Gastrocnemius medialis (tissue), 4 donors: ENCODE measurements at regions of chr1 and their contacts with region 1.

Region 1: DNA sequence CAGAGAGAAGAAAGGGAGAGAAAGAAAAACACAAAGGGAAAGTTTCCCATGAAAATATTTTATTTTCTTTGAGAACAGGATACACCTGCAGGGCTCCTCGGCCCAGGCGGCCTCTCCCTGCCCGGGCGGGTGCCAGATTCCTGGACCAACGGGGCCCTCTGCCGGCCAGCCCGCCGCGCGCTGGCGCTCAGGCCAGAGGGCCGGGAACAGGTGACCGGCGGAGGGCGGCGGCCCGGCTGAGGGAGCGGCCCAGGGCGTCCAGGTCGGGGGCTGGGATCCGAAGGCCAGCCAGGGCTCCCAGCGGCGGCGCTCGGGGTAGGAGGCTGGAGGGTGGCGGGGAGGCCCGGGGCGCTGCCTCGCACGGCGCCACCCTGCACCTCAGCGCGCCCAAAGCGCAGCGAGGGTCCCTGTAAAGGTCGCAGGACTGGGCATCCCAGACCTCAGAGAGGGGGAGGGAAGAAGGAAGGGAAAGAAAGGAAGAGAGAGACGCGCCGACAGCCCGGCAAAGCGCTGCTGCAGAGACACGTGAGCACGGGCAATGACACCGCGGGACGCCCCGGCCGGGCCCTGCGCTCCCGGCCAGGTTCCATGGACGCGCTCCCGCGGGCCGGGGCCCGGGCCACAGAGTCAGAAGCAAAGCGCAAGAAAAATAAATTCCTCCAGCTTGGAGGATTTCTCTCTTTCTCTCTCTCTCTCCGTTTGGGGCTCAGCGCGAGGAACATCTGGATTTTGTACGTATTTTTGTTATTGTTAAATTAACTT is 927 bp downstream of the WNT9A start:
- DNase-seq: peak; percentile 76 to 86
- ATAC-seq: peak; percentile 48 to 49
- H3K4me3 ChIP-seq: peak overlapping the region; percentile 63 to 80 (median 72)
- H3K27ac ChIP-seq: peak overlapping the region; percentile 91 to 98 (median 97)
- H3K4me1 ChIP-seq: peaks cover 46 to 49% of the 10 kb centered on the region in 2 donors
- H3K27me3 ChIP-seq: no peaks in the 10 kb centered on the region
- CTCF ChIP-seq: peak; percentile 71 to 90 (median 84)
- POLR2A ChIP-seq: peak; percentile 51 to 60

Region 2: DNA sequence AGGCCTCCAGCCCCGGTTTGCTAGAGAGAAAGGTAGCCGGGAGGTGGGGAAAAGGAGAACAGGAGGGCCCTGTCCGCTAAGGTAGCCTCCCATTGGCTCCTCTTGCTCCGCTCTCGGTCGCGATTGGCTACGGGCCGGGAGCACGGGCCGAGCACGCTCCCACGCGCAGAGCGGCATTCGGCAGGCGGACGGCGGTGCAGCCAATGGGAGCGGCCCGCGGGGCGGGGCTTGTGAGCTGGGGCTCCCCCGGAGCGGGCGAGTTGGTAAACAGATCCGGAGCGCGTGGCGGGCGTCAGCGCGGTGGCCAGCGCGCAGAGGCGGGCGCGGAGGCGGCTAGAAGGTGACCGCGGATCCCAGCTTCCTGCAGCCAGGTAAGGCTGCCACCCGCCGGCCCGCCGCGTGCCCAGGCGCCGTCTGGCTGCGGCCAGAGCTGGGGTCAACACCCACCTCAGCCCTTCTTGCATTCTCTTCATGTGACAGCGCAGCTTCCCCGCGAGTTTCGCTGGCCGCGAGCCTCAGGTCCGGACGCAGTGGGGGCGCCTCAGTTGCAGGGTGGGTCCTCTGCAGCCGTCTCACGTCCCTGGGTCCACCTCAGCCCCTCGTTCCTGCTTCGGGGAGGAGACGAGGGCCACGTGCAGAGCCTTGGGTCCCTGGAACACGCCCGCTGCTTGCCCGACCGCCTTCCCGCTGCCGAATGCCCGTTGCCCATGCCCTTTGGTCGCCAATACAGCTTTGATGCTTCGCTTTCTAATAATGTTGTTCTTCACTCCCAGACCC is 1006.6 kb before region 1 on chr1 and contains the start of gene COQ8A:
- in situ Hi-C with region 1: no loop called
- intact Hi-C with region 1: loop called (anchors 5 kb)
- DNase-seq: peak; percentile 99 to 100
- ATAC-seq: peak; percentile 73 to 74
- H3K4me3 ChIP-seq: peak within 1 kb of the TSS; percentile 84 to 95 (median 88)
- H3K27ac ChIP-seq: peak within 1 kb of the TSS; percentile 98 to 99 (median 99)
- H3K4me1 ChIP-seq: peaks cover 26 to 47% of the 10 kb centered on the region in 2 donors
- H3K27me3 ChIP-seq: no peaks in the 10 kb centered on the region
- CTCF ChIP-seq: peak in 1 of 5 experiments; percentile 0
- POLR2A ChIP-seq: peak; percentile 97 to 98
- total RNA-seq, gene COQ8A: 950 to 2,403 (median 1,384) TPM

Region 3: DNA sequence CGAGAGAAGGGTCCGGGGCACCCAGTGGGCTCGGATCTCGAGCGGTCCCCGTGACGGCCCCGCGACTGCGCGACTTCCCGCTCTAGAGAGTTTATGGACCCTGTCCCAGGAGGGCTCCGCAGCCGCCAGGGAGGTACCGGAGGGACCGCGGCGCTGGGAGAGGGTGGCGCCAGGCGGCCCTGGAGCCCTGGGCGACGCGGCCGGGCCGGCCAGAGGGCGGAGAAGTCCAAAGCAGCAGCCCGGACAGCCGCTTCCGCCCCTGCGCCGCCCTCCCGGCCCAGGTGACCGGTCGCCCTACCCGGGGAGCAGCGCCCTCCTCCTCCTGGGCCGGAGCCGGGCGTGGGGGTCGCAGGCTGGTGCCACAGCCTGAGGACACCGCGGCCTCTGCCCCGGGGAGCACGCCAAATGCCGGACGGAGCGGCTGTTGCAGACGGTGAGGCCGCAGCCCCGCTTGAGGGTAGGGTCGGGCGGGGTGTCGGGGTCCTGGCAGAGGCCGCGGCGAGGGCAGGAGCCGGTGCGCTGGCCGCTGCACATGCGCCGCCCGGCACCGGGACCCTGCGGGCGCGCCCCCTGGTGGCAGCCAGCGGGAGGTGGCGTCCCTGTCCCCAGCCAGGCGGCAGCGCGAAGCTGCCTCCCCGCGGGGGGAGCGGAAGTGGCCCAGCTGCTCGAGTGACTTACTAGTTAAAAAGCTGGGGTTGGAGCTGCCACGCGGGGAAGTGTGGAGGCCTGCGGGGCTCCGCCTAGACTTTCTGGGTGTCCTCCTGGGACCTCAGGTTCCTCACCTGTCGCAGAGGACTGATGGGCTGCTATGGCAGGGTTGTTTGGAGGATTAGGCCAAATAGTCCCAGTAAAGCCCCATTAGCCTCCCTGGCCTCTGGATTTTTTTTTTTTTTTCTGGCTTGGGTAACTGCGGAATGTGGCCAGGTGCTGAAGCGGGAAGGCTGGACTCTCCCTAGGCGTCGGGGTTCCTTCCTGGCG is 404.4 kb before region 1 on chr1:
- in situ Hi-C with region 1: no loop called
- intact Hi-C with region 1: loop called (anchors 2 kb)
- DNase-seq: peak; percentile 68 to 84
- ATAC-seq: peak; percentile 92 to 93
- H3K4me3 ChIP-seq: peak overlapping the region; percentile 75 to 91 (median 88)
- H3K27ac ChIP-seq: peak overlapping the region; percentile 82 to 94 (median 88)
- H3K4me1 ChIP-seq: peaks cover 5 to 14% of the 10 kb centered on the region in 2 donors
- H3K27me3 ChIP-seq: no peaks in the 10 kb centered on the region
- CTCF ChIP-seq: peak; percentile 90 to 99 (median 97)
- POLR2A ChIP-seq: peak in 1 of 2 donors; percentile 46

Region 4: GRCh38 chr1:227753999-227754711 is 192.7 kb before region 1 on chr1:
- in situ Hi-C with region 1: loop called in 1 of 4 experiments (anchors 5 kb)
- intact Hi-C with region 1: no loop called
- DNase-seq: peak; percentile 69 to 90
- ATAC-seq: peak; percentile 82 to 85
- H3K4me3 ChIP-seq: no peak overlapping the region
- H3K27ac ChIP-seq: peak overlapping the region; percentile 45 to 90 (median 84)
- H3K4me1 ChIP-seq: peaks cover 68 to 75% of the 10 kb centered on the region in 2 donors
- H3K27me3 ChIP-seq: no peaks in the 10 kb centered on the region
- CTCF ChIP-seq: no peak
- POLR2A ChIP-seq: no peak

Region 5: GRCh38 chr1:227787513-227788270 is 159.1 kb before region 1 on chr1:
- in situ Hi-C with region 1: no loop called
- intact Hi-C with region 1: loop called (anchors 1 kb)
- DNase-seq: peak; percentile 87 to 91
- ATAC-seq: peak; percentile 76 to 79
- H3K4me3 ChIP-seq: peak overlapping the region; percentile 68 to 97 (median 70)
- H3K27ac ChIP-seq: peak overlapping the region; percentile 77 to 87 (median 82)
- H3K4me1 ChIP-seq: peaks cover 13 to 20% of the 10 kb centered on the region in 2 donors
- H3K27me3 ChIP-seq: no peaks in the 10 kb centered on the region
- CTCF ChIP-seq: no peak
- POLR2A ChIP-seq: peak; percentile 77 to 88

Region 6: GRCh38 chr1:227816750-227817446 is 129.9 kb before region 1 on chr1:
- in situ Hi-C with region 1: no loop called
- intact Hi-C with region 1: no loop called
- DNase-seq: no peak
- ATAC-seq: no peak
- H3K4me3 ChIP-seq: no peak overlapping the region
- H3K27ac ChIP-seq: no peak overlapping the region
- H3K4me1 ChIP-seq: no peaks in the 10 kb centered on the region
- H3K27me3 ChIP-seq: no peaks in the 10 kb centered on the region
- CTCF ChIP-seq: no peak
- POLR2A ChIP-seq: no peak

Region 7: DNA sequence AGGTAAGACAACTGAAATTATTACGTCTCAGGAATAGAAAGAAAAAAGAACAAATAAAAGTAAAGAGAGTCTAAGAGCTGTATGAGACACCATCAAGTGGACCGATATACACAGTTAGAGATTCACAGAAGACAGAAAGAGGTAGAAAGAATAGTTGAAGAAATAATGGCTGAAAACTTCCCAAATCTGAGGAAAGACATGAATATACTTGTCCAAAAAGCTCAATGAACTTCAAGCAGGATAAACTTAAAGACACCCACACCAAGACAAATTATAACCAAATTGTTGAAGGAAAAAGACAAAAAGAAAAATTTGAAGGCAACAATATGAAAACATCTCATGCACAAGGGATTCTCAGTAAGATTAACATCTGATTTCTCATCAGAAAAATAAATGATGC is 40.4 kb after region 1 on chr1:
- in situ Hi-C with region 1: no loop called
- intact Hi-C with region 1: no loop called
- DNase-seq: no peak
- ATAC-seq: no peak
- H3K4me3 ChIP-seq: no peak overlapping the region
- H3K27ac ChIP-seq: no peak overlapping the region
- H3K4me1 ChIP-seq: no peaks in the 10 kb centered on the region
- H3K27me3 ChIP-seq: peaks cover 0 to 13% (median 10%) of the 10 kb centered on the region in 3 donors
- CTCF ChIP-seq: no peak
- POLR2A ChIP-seq: no peak

Region 8: DNA sequence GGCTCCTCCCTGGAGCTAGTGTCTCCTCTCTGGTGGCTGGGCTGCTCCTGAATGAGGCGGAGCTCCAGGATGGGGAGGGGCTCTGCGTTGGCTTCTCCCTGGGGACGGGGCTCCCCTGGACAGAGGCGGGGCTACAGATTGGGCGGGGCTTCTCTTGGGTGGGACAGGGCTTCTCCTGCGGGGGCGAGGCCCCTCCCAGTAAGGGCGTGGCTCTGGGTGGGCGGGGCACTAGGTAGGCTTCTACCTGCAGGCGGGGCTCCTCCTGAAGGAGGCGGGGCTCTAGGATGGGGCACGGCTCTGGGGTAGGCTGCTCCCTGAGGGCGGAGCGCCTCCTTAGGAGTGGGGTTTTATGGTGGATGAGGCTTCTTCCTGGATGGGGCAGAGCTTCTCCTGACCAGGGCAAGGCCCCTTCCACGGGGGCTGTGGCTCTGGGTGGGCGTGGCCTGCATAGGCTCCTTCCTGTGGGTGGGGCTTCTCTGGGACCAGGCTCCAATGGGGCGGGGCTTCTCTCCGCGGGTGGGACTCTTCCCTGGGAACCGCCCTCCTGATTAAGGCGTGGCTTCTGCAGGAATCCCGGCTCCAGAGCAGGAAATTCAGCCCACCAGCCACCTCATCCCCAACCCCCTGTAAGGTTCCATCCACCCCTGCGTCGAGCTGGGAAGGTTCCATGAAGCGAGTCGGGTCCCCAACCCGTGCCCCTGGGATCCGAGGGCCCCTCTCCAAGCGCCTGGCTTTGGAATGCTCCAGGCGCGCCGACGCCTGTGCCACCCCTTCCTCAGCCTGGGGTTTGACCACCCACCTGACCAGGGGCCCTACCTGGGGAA is 113.0 kb after region 1 on chr1:
- in situ Hi-C with region 1: no loop called
- intact Hi-C with region 1: no loop called
- DNase-seq: no peak
- ATAC-seq: no peak
- H3K4me3 ChIP-seq: peak overlapping the region in 3 of 4 donors; percentile 8 to 13 (median 13)
- H3K27ac ChIP-seq: no peak overlapping the region
- H3K4me1 ChIP-seq: peaks cover 0 to 5% of the 10 kb centered on the region in 2 donors
- H3K27me3 ChIP-seq: peaks cover 53 to 77% (median 67%) of the 10 kb centered on the region in 3 donors
- CTCF ChIP-seq: no peak
- POLR2A ChIP-seq: no peak

Region 9: DNA sequence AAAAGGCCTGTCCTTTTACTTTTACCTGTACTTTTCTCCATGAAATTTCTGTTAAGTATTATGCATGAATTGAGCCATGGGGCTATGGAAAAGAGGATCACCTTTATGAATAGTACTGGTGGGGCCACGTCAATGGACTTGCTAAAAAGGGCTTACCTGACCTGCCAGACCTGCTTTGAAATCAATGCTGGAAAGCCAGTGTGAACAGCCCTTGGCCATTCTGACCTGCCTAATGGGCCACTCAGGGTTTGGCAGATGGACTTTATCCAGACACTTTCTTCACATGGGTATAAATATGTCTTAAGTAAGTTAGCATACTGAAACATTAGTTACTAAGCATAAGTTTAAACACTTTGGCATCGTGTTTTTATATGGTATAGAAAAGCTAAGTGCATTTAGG is 185.0 kb after region 1 on chr1:
- in situ Hi-C with region 1: no loop called
- intact Hi-C with region 1: no loop called
- DNase-seq: no peak
- ATAC-seq: no peak
- H3K4me3 ChIP-seq: no peak overlapping the region
- H3K27ac ChIP-seq: no peak overlapping the region
- H3K4me1 ChIP-seq: peaks cover 3 to 6% of the 10 kb centered on the region in 2 donors
- H3K27me3 ChIP-seq: no peaks in the 10 kb centered on the region
- CTCF ChIP-seq: no peak
- POLR2A ChIP-seq: no peak

Region 10: GRCh38 chr1:229625915-229626831 is 1679.4 kb after region 1 on chr1 and contains the starts of genes TAF5L and URB2:
- in situ Hi-C with region 1: no loop called
- intact Hi-C with region 1: loop called (anchors 10 kb)
- DNase-seq: peak; percentile 80 to 85
- ATAC-seq: peak; percentile 77 to 82
- H3K4me3 ChIP-seq: peak within 1 kb of the TSS; percentile 92 to 100 (median 98)
- H3K27ac ChIP-seq: peak within 1 kb of the TSS; percentile 92 to 99 (median 96)
- H3K4me1 ChIP-seq: peaks cover 49 to 51% of the 10 kb centered on the region in 2 donors
- H3K27me3 ChIP-seq: no peaks in the 10 kb centered on the region
- CTCF ChIP-seq: peak in 3 of 5 experiments; percentile 24 to 35 (median 28)
- POLR2A ChIP-seq: peak; percentile 86 to 91
- total RNA-seq, gene TAF5L: 14.5 to 37.4 (median 24.3) TPM
- total RNA-seq, gene URB2: 9.9 to 20.6 (median 13.4) TPM